ENCODE measurements at regions of chr13 and their contacts with region 1.

Region 1: GRCh38 chr13:48303359-48304142 is at the start of gene RB1:
- DNase-seq: peak in 1 of 2 donors; percentile 95
- H3K4me3 ChIP-seq: peak within 1 kb of the TSS; percentile 90 to 98
- H3K27ac ChIP-seq: peak within 1 kb of the TSS; percentile 99
- H3K4me1 ChIP-seq: peaks cover 34% of the 10 kb centered on the region
- H3K27me3 ChIP-seq: no peaks in the 10 kb centered on the region
- CTCF ChIP-seq: no peak
- POLR2A ChIP-seq: peak; percentile 75 to 96
- total RNA-seq, gene RB1: 34.4 TPM

Region 2: DNA sequence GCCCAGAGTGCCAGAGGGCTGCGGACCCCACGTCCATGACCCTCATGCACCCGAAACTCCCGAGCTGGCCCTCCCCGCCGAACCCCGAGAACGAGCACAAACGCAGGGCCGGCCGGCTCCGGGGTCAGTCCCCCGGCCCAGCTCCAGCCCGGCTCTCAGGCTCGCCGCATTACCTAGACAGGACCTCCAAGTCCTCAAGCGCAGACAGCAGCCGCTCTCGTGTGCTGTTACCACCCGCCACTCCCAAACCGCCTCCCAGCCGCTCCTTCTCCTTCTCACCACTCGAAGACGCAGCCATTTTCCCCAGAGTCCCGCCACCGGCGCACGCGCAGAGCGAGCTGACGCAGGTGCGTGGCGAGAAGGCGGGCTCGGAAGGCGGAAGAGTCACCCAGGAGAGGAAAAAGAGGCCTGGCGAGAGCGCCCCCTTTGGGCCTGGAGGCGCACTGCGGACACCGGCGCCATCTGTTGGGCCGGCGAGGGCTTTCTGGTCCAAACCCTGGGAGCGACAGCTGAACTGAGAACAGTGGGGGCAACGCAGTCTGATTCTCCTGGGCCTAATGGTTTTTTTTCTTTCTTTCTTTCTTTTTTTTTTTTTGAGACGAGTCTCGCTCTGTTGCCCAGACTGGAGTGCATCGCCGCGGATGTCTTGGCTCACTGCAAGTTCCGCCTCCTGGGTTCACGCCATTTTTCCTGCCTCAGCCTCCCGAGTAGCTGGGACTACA is 208.6 kb before region 1 on chr13 and contains the start of gene MED4:
- intact Hi-C with region 1: loop called (anchors 10 kb)
- DNase-seq: peak; percentile 93 to 99
- H3K4me3 ChIP-seq: peak within 1 kb of the TSS; percentile 72 to 98
- H3K27ac ChIP-seq: peak within 1 kb of the TSS; percentile 94
- H3K4me1 ChIP-seq: peaks cover 38% of the 10 kb centered on the region
- H3K27me3 ChIP-seq: no peaks in the 10 kb centered on the region
- CTCF ChIP-seq: peak; percentile 94 to 100 (median 98)
- POLR2A ChIP-seq: peak in 1 of 2 donors; percentile 74
- total RNA-seq, gene MED4: 47.1 TPM

Region 3: DNA sequence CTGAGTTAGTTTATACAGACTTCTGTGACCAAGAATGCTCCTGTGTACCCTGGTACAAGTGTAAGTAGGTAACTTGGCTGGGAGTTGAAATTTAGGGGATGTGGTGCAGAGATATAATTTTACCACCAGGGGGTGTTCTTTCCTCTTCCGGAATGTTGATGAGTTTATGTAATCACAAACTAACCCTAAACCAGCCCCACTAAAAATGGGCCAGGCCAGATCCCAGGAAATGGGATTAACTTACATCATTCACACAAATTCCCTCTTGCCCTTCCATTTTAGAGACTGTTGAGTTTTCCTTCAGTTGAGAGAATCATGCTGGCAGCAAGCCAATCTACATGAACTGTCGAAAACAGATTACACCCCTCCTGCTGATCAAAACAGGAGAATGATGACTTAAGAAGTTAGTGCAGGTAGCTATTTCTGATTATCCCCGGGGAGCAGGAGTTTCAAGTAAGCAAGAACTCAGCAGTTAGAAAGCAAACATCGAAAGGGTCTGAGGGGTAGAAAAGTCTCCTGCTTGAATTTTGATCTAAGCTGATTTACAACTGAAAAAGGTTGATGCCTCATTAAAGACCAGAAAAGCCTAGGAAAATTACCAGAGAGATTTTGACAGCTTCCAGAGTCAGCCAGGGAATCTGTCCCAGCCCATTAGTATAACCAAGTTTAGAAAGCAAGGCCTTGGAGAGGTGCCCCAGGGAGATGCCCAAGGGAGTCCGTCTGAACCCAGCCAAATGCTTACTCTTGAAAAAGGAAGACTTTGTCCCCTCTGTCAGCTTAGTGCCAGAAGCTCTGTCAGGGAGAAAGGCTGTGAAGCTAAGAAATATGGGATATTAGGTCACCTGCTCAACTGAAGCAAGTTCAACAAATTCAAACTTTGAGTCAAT is 176.4 kb before region 1 on chr13:
- intact Hi-C with region 1: loop called (anchors 5 kb)
- DNase-seq: no peak
- H3K4me3 ChIP-seq: no peak overlapping the region
- H3K27ac ChIP-seq: peak overlapping the region; percentile 86
- H3K4me1 ChIP-seq: peaks cover 51% of the 10 kb centered on the region
- H3K27me3 ChIP-seq: no peaks in the 10 kb centered on the region
- CTCF ChIP-seq: peak; percentile 30 to 84 (median 65)
- POLR2A ChIP-seq: no peak

Region 4: GRCh38 chr13:48175185-48175584 is 128.4 kb before region 1 on chr13:
- intact Hi-C with region 1: no loop called
- DNase-seq: no peak
- H3K4me3 ChIP-seq: no peak overlapping the region
- H3K27ac ChIP-seq: no peak overlapping the region
- H3K4me1 ChIP-seq: no peaks in the 10 kb centered on the region
- H3K27me3 ChIP-seq: no peaks in the 10 kb centered on the region
- CTCF ChIP-seq: no peak
- POLR2A ChIP-seq: no peak

Region 5: GRCh38 chr13:48412881-48413351 is 109.4 kb after region 1 on chr13 and contains the start of gene LPAR6:
- intact Hi-C with region 1: loop called (anchors 10 kb)
- DNase-seq: no peak
- H3K4me3 ChIP-seq: peak within 1 kb of the TSS; percentile 56 to 68
- H3K27ac ChIP-seq: peak within 1 kb of the TSS; percentile 88
- H3K4me1 ChIP-seq: peaks cover 29% of the 10 kb centered on the region
- H3K27me3 ChIP-seq: no peaks in the 10 kb centered on the region
- CTCF ChIP-seq: no peak
- POLR2A ChIP-seq: peak in 1 of 2 donors; percentile 75
- total RNA-seq, gene LPAR6: 43.2 TPM

Measured in vagina (tissue), 2 donors.